Activated T-helper 1 cell treated with anti-CD3 and anti-CD28 coated beads, Interleukin-12 subunit alpha, Interleukin-12 subunit beta, Interleukin-2, Interleukin-4 antibody, amounts not matched to agents 30 ng/mL and 10 ng/mL and 1 ng/mL, durations not matched to agents 14 hours and 24 hours and 36 hours (primary cell): ENCODE measurements at regions of chr1 and their contacts with region 1.

Region 1: DNA sequence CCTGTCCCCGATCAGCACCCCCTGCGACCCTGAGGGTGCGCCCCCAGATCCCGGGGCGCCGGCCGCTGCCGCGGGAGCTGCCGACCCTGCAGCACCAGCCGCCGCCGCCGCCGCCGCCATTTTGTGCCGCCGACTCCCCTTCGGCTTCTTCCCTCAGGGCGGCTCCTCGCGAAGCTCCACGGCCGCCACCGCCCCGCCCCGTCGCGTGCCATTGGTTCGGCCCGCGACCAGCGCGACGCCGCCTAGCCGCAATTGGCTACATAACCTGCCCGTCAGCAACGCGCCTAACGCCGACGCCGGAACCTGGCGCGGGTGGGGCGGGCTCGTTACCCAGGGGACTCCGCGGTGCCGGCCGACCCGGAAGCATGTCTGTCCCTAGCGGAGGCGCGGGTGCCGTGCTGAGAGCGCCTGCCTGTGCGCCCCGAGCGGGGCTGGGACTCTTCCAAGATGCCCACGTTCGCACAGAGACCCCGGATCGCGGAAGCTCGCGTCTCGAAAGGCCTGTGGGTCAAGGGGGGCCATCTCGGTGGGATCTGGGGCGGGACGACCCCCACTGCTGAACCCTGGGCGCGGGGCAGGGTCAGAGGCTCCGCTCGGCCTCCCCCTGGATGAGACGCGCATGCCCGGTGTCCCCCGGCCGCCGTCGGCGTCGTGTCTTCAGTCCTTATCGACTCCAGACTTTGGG is at the start of gene CCNL2:
- DNase-seq: peak; percentile 99
- H3K4me3 Mint-ChIP-seq: peak within 1 kb of the TSS; percentile 95
- H3K27ac Mint-ChIP-seq: peak within 1 kb of the TSS; percentile 76
- H3K4me1 Mint-ChIP-seq: peaks cover 37% of the 10 kb centered on the region
- H3K27me3 Mint-ChIP-seq: no peaks in the 10 kb centered on the region
- total RNA-seq, gene CCNL2: 138 and 139 TPM in 2 replicates

Region 2: GRCh38 chr1:1349256-1350012 is 49.9 kb before region 1 on chr1 and contains the start of gene DVL1:
- intact Hi-C with region 1: loop called (anchors 1 kb)
- DNase-seq: peak; percentile 56
- H3K4me3 Mint-ChIP-seq: peak within 1 kb of the TSS; percentile 82
- H3K27ac Mint-ChIP-seq: peak within 1 kb of the TSS; percentile 63
- H3K4me1 Mint-ChIP-seq: peaks cover 19% of the 10 kb centered on the region
- H3K27me3 Mint-ChIP-seq: peaks cover 22% of the 10 kb centered on the region
- total RNA-seq, gene DVL1: 66.5 and 72.2 TPM in 2 replicates

Region 3: GRCh38 chr1:1441002-1441888 is 41.9 kb after region 1 on chr1:
- intact Hi-C with region 1: loop called (anchors 2 kb)
- DNase-seq: peak; percentile 30
- H3K4me3 Mint-ChIP-seq: no peak overlapping the region
- H3K27ac Mint-ChIP-seq: no peak overlapping the region
- H3K4me1 Mint-ChIP-seq: no peaks in the 10 kb centered on the region
- H3K27me3 Mint-ChIP-seq: peaks cover 2% of the 10 kb centered on the region

Region 4: DNA sequence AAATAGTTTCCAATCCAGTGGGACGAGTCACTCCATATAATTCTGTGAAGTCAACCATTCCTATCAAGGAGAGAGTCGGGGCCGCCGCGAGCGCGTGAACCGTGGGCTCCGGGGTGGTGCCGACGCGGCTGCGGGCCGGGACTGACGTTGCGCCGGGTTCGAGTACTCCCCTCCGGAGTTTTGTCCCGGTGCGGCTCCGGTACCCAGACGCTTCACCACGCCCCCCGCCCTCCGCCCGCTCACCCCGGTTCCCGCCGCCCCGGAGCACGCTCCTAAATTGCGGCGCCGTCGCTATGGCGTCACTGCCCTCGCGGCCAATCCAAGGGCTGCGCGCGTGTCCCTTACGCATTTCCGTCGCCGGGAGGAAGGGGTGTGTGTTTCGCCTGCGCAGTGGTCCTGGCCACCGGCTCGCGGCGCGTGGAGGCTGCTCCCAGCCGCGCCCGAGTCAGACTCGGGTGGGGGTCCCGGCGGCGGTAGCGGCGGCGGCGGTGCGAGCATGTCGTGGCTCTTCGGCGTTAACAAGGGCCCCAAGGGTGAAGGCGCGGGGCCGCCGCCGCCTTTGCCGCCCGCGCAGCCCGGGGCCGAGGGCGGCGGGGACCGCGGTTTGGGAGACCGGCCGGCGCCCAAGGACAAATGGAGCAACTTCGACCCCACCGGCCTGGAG is 72.2 kb after region 1 on chr1 and contains the start of gene ATAD3B:
- intact Hi-C with region 1: loop called (anchors 2 kb)
- DNase-seq: peak; percentile 92
- H3K4me3 Mint-ChIP-seq: peak within 1 kb of the TSS; percentile 88
- H3K27ac Mint-ChIP-seq: peak within 1 kb of the TSS; percentile 86
- H3K4me1 Mint-ChIP-seq: peaks cover 10% of the 10 kb centered on the region
- H3K27me3 Mint-ChIP-seq: no peaks in the 10 kb centered on the region
- total RNA-seq, gene ATAD3B: 106 and 113 TPM in 2 replicates

Region 5: DNA sequence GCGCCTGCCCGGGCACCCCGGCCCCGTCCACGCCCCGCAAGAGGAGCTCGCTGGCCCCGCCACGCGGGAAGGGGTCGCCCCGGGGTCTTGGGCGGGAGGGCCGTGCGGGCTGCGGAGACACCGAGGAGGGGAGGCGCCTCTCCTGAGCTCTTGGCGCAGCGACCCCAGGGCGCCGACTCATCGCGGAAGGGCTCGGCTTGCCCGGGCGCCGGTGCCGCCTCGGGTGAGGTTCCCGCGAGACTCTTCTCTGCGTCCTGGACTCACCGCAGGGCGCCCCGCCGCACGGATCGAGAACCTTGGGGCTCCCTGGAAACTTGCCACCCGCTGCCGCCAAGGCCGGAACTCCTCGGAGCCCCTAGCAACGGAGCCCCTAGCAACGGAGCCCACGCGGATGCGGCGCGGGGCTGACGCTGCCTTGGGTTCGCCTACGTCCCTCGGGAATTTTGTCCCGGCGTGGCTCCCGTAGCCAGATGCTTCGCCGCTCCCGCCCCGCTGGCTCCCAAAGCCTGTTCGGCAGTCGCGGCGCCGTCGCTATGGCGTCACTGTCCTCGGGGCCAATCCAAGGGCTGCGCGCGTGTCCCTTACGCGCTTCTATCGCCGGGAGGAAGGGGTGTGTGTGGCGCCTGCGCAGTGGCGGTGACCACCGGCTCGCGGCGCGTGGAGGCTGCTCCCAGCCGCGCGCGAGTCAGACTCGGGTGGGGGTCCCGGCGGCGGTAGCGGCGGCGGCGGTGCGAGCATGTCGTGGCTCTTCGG is 112.4 kb after region 1 on chr1 and contains the start of gene ATAD3A:
- intact Hi-C with region 1: loop called (anchors 1 kb)
- DNase-seq: peak; percentile 95
- H3K4me3 Mint-ChIP-seq: peak within 1 kb of the TSS; percentile 97
- H3K27ac Mint-ChIP-seq: peak within 1 kb of the TSS; percentile 92
- H3K4me1 Mint-ChIP-seq: peaks cover 7% of the 10 kb centered on the region
- H3K27me3 Mint-ChIP-seq: no peaks in the 10 kb centered on the region
- total RNA-seq, gene ATAD3A: 108 TPM in 2 replicates

Region 6: DNA sequence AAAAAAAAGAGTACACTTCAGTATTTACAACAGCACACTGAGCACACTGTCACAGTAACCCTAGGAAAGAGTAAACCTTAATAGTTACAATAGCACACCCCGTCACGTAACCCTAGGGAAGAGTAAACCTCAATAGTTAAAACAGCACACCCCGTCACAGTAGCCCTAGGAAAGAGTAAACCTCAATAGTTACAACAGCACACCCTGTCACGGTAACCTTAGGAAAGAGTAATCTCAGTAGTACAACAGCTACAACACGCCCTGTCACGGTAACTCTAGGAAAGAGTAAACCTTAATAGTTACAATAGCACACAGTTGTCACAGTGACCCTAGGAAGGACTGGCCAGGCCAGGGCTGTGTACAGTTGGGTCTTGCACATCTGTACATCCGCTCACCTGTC is 321.9 kb after region 1 on chr1:
- intact Hi-C with region 1: loop called (anchors 2 kb)
- DNase-seq: no peak
- H3K4me3 Mint-ChIP-seq: peak overlapping the region; percentile 10
- H3K27ac Mint-ChIP-seq: no peak overlapping the region
- H3K4me1 Mint-ChIP-seq: peaks cover 5% of the 10 kb centered on the region
- H3K27me3 Mint-ChIP-seq: no peaks in the 10 kb centered on the region